Endothelial cell of umbilical vein (primary cell): ENCODE measurements at regions of chr15 and their contacts with region 1.

Region 1: GRCh38 chr15:83207622-83208411 is at the start of gene HDGFL3:
- DNase-seq: peak; percentile 59
- H3K4me3 ChIP-seq: peak within 1 kb of the TSS; percentile 91 to 95 (median 93)
- H3K27ac ChIP-seq: peak within 1 kb of the TSS; percentile 95
- H3K4me1 ChIP-seq: peaks cover 29% of the 10 kb centered on the region
- H3K27me3 ChIP-seq: no peaks in the 10 kb centered on the region
- CTCF ChIP-seq: peak in 1 of 2 donors; percentile 26
- POLR2A ChIP-seq: peak; percentile 47
- total RNA-seq, gene HDGFL3: 155 and 156 TPM in 2 replicates

Region 2: DNA sequence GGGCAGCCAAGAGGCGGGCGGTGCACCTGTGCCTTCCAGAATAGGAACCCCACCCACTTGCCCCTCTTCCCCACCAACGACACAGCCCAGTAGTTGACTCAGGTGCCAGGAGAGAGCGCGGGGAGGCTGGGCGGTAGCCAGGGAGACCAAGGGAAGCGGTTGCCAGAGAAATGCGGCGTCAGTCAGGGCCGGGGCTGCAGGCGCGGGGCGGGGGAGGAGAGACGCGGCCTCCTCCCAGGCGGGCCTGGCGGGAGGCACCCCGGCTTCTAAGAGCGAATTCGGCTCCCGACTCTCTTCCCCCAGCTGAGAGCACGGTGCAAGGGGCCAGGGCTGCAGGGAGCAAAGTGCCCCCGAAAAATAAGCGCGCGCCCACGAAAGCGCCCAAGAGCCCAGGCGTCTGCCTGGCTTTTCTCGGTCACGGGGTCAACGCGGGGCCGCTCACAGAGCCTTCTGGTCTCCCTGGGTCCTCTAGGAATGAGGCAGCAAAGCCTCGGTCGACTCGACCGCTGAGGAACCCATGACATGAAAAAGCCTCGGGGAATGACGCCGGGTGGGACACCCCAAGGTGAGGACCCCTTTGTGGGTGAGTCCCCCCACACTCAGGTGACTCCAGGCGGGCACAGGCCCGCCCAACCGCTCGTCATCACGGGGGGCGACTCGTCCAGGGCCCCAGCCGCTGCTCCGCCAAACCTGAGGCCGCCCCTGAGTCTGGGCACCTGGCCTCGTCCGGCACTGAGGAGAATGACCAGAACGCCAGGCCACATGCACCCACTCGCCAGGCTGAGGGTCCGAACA is 561.4 kb before region 1 on chr15:
- CTCF ChIA-PET with region 1: no interaction called
- POLR2A ChIA-PET with region 1: no interaction called
- dilution Hi-C with region 1: no loop called
- intact Hi-C with region 1: no loop called
- DNase-seq: no peak
- H3K4me3 ChIP-seq: no peak overlapping the region
- H3K27ac ChIP-seq: no peak overlapping the region
- H3K4me1 ChIP-seq: no peaks in the 10 kb centered on the region
- H3K27me3 ChIP-seq: peaks cover 36 to 49% of the 10 kb centered on the region in 2 experiments
- CTCF ChIP-seq: no peak
- POLR2A ChIP-seq: no peak

Region 3: GRCh38 chr15:82749951-82750830 is 457.6 kb before region 1 on chr15:
- CTCF ChIA-PET with region 1: no interaction called
- POLR2A ChIA-PET with region 1: no interaction called
- dilution Hi-C with region 1: no loop called
- intact Hi-C with region 1: loop called (anchors 5 kb)
- DNase-seq: peak; percentile 95
- H3K4me3 ChIP-seq: peak overlapping the region; percentile 61 to 85 (median 80)
- H3K27ac ChIP-seq: peak overlapping the region; percentile 48
- H3K4me1 ChIP-seq: peaks cover 15% of the 10 kb centered on the region
- H3K27me3 ChIP-seq: no peaks in the 10 kb centered on the region
- CTCF ChIP-seq: no peak
- POLR2A ChIP-seq: peak; percentile 96

Region 4: GRCh38 chr15:83011271-83012075 is 196.3 kb before region 1 on chr15 and contains the start of gene C15orf40:
- CTCF ChIA-PET with region 1: interaction called, 14 read pairs
- POLR2A ChIA-PET with region 1: no interaction called
- dilution Hi-C with region 1: no loop called
- intact Hi-C with region 1: loop called (anchors 1 kb)
- DNase-seq: peak; percentile 89
- H3K4me3 ChIP-seq: peak within 1 kb of the TSS; percentile 74 to 100 (median 87)
- H3K27ac ChIP-seq: peak within 1 kb of the TSS; percentile 64
- H3K4me1 ChIP-seq: peaks cover 17% of the 10 kb centered on the region
- H3K27me3 ChIP-seq: no peaks in the 10 kb centered on the region
- CTCF ChIP-seq: peak; percentile 57 to 75
- POLR2A ChIP-seq: peak; percentile 92
- total RNA-seq, gene C15orf40: 20.9 and 27.9 TPM in 2 replicates

Region 5: GRCh38 chr15:83108266-83109226 is 99.3 kb before region 1 on chr15:
- CTCF ChIA-PET with region 1: interaction called, 3 read pairs
- POLR2A ChIA-PET with region 1: no interaction called
- dilution Hi-C with region 1: no loop called
- intact Hi-C with region 1: loop called (anchors 1 kb)
- DNase-seq: peak; percentile 90
- H3K4me3 ChIP-seq: peak overlapping the region; percentile 55 to 77 (median 56)
- H3K27ac ChIP-seq: peak overlapping the region; percentile 95
- H3K4me1 ChIP-seq: peaks cover 56% of the 10 kb centered on the region
- H3K27me3 ChIP-seq: no peaks in the 10 kb centered on the region
- CTCF ChIP-seq: no peak
- POLR2A ChIP-seq: peak; percentile 60

Region 6: GRCh38 chr15:83164111-83164770 is 43.6 kb before region 1 on chr15:
- CTCF ChIA-PET with region 1: interaction called, 11 read pairs
- POLR2A ChIA-PET with region 1: interaction called, 5 read pairs
- dilution Hi-C with region 1: no loop called
- intact Hi-C with region 1: loop called (anchors 1 kb)
- DNase-seq: peak; percentile 80
- H3K4me3 ChIP-seq: peak overlapping the region in 1 of 3 experiments; percentile 49
- H3K27ac ChIP-seq: peak overlapping the region; percentile 89
- H3K4me1 ChIP-seq: peaks cover 44% of the 10 kb centered on the region
- H3K27me3 ChIP-seq: no peaks in the 10 kb centered on the region
- CTCF ChIP-seq: no peak
- POLR2A ChIP-seq: no peak